PC-9 (cell line): ENCODE measurements at regions of chr10 and their contacts with region 1.

Region 1: DNA sequence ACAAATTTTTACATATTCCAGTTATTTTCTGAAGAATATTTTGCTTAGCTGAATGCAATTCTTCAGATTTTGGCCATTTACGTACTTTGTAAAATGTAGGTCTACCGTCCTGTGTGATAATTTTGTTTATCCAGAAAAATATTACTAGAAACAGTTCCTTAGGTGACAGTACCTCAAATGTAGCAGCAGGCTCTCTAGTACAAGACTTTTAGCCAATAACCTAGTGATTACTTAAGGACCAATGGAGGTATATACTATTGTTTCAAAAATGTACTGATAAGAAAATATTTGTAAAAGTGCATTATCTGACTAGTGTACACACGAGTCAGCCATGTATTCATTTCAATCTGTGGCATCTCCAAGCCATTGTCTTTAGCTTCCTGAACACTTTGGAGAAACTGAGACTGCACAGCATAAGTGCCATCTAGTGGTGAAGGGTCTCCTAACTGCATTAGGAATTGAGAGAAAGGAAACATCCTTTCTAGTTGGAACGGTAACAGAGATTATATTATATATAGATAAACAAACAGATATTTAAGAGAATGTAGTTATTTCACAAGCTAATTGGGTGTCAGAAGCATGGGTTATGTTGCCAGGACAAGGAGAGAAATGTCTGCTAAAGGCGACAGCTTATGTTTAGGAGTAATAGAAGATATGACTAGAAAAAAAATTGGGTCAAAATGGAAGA is 23.7 kb downstream of the RTKN2 start:
- DNase-seq: peak; percentile 37 to 58
- H3K4me3 ChIP-seq: no peak overlapping the region
- H3K27ac ChIP-seq: no peak overlapping the region
- H3K4me1 ChIP-seq: peaks cover 35% of the 10 kb centered on the region
- H3K27me3 ChIP-seq: no peaks in the 10 kb centered on the region
- CTCF ChIP-seq: peak; percentile 88

Region 2: DNA sequence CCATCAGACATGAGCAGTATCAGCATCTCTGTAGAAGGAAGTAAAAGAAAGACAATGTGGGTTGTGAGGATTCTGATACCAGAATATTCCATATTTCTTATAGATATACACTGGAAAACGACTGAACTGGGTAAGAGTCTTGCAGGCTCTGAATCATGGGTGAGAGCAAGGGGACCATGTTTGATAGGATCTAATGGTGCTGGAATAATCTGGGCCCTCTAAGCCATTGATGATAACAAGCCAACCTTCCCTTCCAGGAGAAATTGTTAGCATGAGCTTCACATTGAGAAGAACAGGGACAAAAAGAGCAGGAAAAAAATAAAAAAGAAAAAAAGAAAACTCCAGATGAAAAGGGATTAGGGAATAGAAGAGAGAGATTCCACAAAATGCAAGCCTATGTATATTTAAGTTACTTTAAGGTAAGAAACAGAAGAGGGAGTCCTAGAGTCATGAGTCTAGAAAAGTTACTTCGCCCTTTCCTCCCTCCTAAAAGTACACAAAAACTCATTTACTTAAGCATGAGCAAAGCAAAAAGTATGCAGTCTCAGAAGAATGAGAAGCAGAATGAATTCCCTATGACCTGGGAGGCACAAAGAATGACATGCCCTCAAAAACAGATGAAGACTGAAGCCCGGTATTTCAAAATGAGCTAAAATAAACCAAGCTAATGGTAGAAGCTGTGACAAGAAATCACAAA is 973.6 kb before region 1 on chr10:
- CTCF ChIA-PET with region 1: no interaction called
- POLR2A ChIA-PET with region 1: no interaction called
- intact Hi-C with region 1: loop called (anchors 10 kb)
- DNase-seq: peak in 1 of 2 experiments; percentile 84
- H3K4me3 ChIP-seq: no peak overlapping the region
- H3K27ac ChIP-seq: no peak overlapping the region
- H3K4me1 ChIP-seq: peaks cover 10% of the 10 kb centered on the region; the same call in 1 of the 2 replicates
- H3K27me3 ChIP-seq: no peaks in the 10 kb centered on the region
- CTCF ChIP-seq: peak; percentile 55

Region 3: DNA sequence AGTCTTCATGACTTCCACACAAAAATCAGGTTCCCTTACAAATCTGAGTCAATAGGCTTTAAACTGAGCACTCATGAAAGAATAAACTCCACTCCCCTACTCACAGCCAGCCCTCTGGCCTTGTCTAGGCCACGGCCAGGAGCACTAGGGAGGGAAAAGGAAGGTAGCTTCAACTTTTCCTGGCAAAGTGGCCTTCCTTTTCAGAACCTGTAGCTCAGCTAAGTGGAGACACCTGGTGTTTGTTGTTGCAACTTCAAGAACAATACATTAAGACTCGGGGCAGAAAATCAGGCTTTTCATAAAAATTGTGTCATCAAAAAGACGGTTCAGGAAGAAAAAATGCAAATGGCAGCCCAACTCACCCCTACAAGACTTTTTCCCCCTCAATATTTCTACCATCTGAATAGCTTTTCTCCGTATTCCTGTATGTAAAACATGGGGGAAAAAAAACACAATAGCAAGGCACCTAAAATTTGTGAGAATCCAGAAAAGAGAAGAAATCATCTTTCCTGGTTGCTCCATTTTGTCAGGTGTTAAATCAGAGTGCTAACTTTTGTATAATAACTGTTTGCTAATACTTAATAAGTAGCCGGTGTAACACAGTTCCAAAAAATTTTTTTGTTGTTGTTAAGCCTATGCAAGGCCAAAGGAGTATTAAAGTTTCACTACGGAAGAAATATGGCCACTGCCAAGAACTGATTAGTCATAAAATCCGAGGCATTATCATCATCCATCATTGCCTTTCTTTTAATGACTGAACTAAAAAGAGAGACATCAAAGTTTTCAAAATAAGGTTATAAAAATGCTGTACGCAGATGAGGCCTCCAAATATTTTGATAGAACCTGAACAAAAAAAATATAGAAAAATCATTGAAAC is 409.6 kb before region 1 on chr10:
- CTCF ChIA-PET with region 1: no interaction called
- POLR2A ChIA-PET with region 1: no interaction called
- intact Hi-C with region 1: loop called (anchors 5 kb)
- DNase-seq: no peak
- H3K4me3 ChIP-seq: no peak overlapping the region
- H3K27ac ChIP-seq: peak overlapping the region; percentile 70
- H3K4me1 ChIP-seq: peaks cover 69% of the 10 kb centered on the region
- H3K27me3 ChIP-seq: no peaks in the 10 kb centered on the region
- CTCF ChIP-seq: peak; percentile 59; the same call in 1 of the 2 replicates

Region 4: GRCh38 chr10:61981402-61981841 is 263.5 kb before region 1 on chr10:
- CTCF ChIA-PET with region 1: no interaction called
- POLR2A ChIA-PET with region 1: no interaction called
- intact Hi-C with region 1: loop called (anchors 1 kb)
- DNase-seq: peak; percentile 45 to 95
- H3K4me3 ChIP-seq: no peak overlapping the region
- H3K27ac ChIP-seq: peak overlapping the region; percentile 48
- H3K4me1 ChIP-seq: peaks cover 15% of the 10 kb centered on the region
- H3K27me3 ChIP-seq: no peaks in the 10 kb centered on the region
- CTCF ChIP-seq: no peak

Region 5: DNA sequence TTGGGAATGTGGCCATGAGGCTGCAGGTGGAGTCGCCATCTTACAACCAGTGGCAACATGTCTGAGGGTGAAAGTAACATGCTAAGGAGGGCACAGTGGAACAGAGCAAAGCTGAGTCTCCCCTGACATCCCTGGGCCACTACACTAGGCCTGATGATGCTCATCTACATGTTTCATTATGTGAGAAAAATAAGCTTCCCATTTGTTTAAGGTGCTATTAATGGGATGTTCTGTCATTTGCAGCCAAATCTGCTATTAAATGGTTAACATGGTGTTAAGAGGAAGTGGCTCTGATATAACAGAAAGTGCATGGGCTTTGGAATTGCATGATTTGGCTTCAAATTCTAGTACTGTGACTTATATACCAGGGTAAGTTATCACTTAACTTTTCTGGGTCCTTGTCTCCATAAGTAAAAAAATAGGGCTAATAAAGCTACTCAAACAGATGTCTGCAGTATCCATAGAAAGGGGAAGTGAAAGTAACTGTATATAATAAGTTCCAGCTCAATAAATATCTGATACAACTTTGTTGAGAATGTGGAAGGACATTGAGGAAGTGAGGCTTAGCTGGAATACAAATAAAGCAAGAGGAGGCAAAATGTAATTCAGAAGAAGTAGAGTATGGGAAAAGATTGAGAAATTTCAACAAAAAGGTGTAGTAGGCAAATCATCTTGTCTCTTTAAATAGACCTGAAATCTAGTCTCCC is 135.2 kb before region 1 on chr10:
- CTCF ChIA-PET with region 1: interaction called, 3 read pairs
- POLR2A ChIA-PET with region 1: interaction called, 13 read pairs
- intact Hi-C with region 1: loop called (anchors 1 kb)
- DNase-seq: no peak
- H3K4me3 ChIP-seq: no peak overlapping the region
- H3K27ac ChIP-seq: peak overlapping the region; percentile 49
- H3K4me1 ChIP-seq: peaks cover 80% of the 10 kb centered on the region
- H3K27me3 ChIP-seq: no peaks in the 10 kb centered on the region
- CTCF ChIP-seq: no peak

Region 6: DNA sequence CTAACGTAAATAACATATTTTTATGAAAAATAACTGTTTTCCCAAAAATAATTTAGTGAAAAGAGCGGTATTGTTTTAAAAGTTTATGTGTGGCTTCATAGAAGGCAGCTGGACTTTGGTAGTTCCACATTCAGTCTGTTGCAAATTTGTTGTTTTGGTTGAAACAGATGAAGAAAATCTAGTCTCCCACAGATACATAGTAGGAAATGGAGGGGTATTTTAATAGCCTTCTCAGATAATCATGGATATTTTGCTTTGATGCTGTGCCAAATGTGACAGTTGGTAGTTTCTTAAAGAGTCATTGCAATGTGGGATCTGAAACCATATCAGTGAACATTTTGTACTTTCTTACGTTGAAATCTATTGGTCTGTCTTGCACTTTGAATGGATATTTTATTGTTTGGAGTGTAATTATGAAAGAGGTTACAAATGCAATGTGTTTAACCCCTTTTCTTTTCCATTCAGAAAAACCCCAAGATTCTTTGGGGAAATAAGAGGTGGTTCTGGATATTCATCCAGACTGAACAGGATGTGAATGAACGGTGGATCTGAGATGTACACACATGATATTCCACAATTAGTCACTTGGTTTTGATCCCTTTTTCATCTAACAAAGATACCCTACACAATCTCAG is 139.6 kb after region 1 on chr10:
- CTCF ChIA-PET with region 1: no interaction called
- POLR2A ChIA-PET with region 1: no interaction called
- intact Hi-C with region 1: no loop called
- DNase-seq: peak in 1 of 2 experiments; percentile 55
- H3K4me3 ChIP-seq: peak overlapping the region; percentile 9; the same call in 1 of the 2 replicates
- H3K27ac ChIP-seq: peak overlapping the region; percentile 88
- H3K4me1 ChIP-seq: peaks cover 45% of the 10 kb centered on the region
- H3K27me3 ChIP-seq: no peaks in the 10 kb centered on the region
- CTCF ChIP-seq: no peak